Caco-2 (cell line): ENCODE measurements at regions of chr5 and their contacts with region 1.

Region 1: DNA sequence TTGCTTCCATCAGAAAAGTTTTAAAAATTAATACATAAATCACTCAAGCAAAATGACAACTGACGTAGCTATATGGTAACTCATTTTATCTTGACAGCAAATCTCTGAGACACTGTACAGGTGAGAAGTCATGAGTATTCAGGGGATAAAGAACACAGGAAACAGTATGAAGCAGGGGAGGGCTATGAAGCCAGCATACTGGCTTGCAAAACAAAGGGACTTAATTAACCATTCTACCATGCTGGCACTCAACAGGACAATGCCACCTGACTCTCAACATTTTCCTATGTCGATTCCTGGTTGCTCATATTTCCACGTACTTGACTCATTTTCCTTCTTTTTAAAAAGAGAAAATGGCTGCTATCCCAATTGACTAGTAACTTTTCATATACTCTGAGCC is 151.4 kb upstream of the RETREG1 start:
- DNase-seq: no peak
- H3K4me3 ChIP-seq: no peak overlapping the region
- H3K4me3 Mint-ChIP-seq: no peak overlapping the region
- H3K27ac Mint-ChIP-seq: no peak overlapping the region
- H3K4me1 ChIP-seq: no peaks in the 10 kb centered on the region
- H3K4me1 Mint-ChIP-seq: no peaks in the 10 kb centered on the region
- H3K27me3 ChIP-seq: no peaks in the 10 kb centered on the region
- H3K27me3 Mint-ChIP-seq: no peaks in the 10 kb centered on the region
- CTCF ChIP-seq: no peak

Region 2: GRCh38 chr5:16809395-16810207 is 41.4 kb after region 1 on chr5:
- CTCF ChIA-PET with region 1: no interaction called
- POLR2A ChIA-PET with region 1: interaction called, 16 read pairs
- intact Hi-C with region 1: no loop called
- DNase-seq: no peak
- H3K4me3 ChIP-seq: no peak overlapping the region
- H3K4me3 Mint-ChIP-seq: no peak overlapping the region
- H3K27ac Mint-ChIP-seq: no peak overlapping the region
- H3K4me1 ChIP-seq: peaks cover 16% of the 10 kb centered on the region
- H3K4me1 Mint-ChIP-seq: peaks cover 44% of the 10 kb centered on the region
- H3K27me3 ChIP-seq: no peaks in the 10 kb centered on the region
- H3K27me3 Mint-ChIP-seq: no peaks in the 10 kb centered on the region
- CTCF ChIP-seq: no peak